Uterus (tissue), 4 donors: ENCODE measurements at regions of chr14 and their contacts with region 1.

Region 1: DNA sequence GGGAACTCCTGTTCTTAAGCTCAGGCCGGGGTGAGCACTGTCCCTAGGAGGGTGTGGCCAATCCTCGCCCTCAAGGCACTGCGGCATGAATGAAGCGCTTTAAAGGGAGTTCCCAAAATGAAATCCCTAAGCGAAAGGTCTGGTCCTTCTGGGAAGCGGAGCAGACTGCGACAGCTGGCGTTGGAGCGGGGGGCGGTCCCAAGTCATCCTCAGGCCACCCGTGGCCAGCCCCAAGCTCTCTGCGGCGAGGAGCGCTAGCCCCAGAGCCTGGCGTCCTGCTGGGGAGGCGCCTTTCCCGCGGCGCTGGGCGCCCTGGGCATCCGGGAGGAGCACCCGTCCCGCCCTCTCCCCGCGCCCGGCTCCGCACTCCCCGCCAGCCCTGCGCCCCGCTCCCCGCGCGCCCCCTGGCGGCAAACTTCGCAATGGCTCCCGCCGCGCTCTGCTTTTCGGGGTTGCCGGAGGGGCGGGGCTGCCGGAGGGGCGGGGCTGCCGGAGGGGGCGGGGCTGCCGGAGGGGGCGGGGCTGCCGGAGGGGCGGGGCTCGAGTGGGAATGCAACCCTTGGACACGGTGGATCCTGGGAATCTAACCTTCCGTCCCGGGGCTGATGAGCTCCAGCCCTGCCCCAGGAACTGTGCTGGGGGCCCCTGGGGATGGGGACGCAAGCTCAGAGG is 25.4 kb downstream of the ZBTB42 start:
- DNase-seq: peak; percentile 87 to 93
- H3K4me3 ChIP-seq: peak overlapping the region; percentile 42 to 58
- H3K27ac ChIP-seq: peak overlapping the region; percentile 28 to 52
- H3K4me1 ChIP-seq: peaks cover 0 to 5% of the 10 kb centered on the region in 2 donors
- H3K27me3 ChIP-seq: no peaks in the 10 kb centered on the region
- CTCF ChIP-seq: peak; percentile 57 to 95 (median 88)
- POLR2A ChIP-seq: no peak

Region 2: GRCh38 chr14:104759001-104759969 is 67.0 kb before region 1 on chr14:
- intact Hi-C with region 1: no loop called
- DNase-seq: no peak
- H3K4me3 ChIP-seq: no peak overlapping the region
- H3K27ac ChIP-seq: no peak overlapping the region
- H3K4me1 ChIP-seq: peaks cover 0 to 4% of the 10 kb centered on the region in 2 donors
- H3K27me3 ChIP-seq: no peaks in the 10 kb centered on the region
- CTCF ChIP-seq: no peak
- POLR2A ChIP-seq: no peak

Region 3: DNA sequence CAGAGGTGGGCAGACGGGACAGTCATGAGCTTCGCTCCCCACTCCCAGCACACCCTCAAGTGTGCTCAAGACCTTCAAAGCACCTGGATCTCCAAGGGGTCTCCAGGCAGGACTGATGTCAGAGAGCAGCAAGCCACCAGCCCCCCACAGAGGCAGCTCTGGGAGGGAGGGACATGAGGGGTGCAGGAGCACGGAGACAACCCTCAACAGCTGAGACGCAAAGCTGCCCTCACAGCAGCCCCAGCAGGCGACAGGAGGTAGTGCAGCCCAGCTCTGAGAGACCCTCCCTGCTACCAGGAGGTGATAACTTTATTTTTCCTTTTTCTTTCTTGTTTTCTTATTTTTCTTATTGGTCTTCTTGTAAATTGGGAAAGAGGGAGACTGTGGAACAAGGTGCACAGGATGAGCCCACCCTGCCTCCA is 55.5 kb before region 1 on chr14:
- intact Hi-C with region 1: loop called (anchors 5 kb)
- DNase-seq: no peak
- H3K4me3 ChIP-seq: no peak overlapping the region
- H3K27ac ChIP-seq: no peak overlapping the region
- H3K4me1 ChIP-seq: peaks cover 0 to 8% of the 10 kb centered on the region in 2 donors
- H3K27me3 ChIP-seq: no peaks in the 10 kb centered on the region
- CTCF ChIP-seq: no peak
- POLR2A ChIP-seq: no peak

Region 4: GRCh38 chr14:104882325-104883115 is 56.2 kb after region 1 on chr14:
- intact Hi-C with region 1: no loop called
- DNase-seq: no peak
- H3K4me3 ChIP-seq: no peak overlapping the region
- H3K27ac ChIP-seq: no peak overlapping the region
- H3K4me1 ChIP-seq: no peaks in the 10 kb centered on the region
- H3K27me3 ChIP-seq: no peaks in the 10 kb centered on the region
- CTCF ChIP-seq: no peak
- POLR2A ChIP-seq: no peak

Region 5: GRCh38 chr14:104908303-104908702 is 82.0 kb after region 1 on chr14:
- intact Hi-C with region 1: no loop called
- DNase-seq: no peak
- H3K4me3 ChIP-seq: no peak overlapping the region
- H3K27ac ChIP-seq: no peak overlapping the region
- H3K4me1 ChIP-seq: no peaks in the 10 kb centered on the region
- H3K27me3 ChIP-seq: no peaks in the 10 kb centered on the region
- CTCF ChIP-seq: no peak
- POLR2A ChIP-seq: no peak